Calu3 (cell line): ENCODE measurements at regions of chr6 and their contacts with region 1.

Region 1: GRCh38 chr6:129273161-129273560 is 390.2 kb downstream of the LAMA2 start:
- DNase-seq: no peak
- H3K4me3 Mint-ChIP-seq: no peak overlapping the region
- H3K27ac Mint-ChIP-seq: no peak overlapping the region
- H3K4me1 Mint-ChIP-seq: no peaks in the 10 kb centered on the region
- H3K27me3 Mint-ChIP-seq: no peaks in the 10 kb centered on the region
- CTCF ChIP-seq: no peak

Region 2: DNA sequence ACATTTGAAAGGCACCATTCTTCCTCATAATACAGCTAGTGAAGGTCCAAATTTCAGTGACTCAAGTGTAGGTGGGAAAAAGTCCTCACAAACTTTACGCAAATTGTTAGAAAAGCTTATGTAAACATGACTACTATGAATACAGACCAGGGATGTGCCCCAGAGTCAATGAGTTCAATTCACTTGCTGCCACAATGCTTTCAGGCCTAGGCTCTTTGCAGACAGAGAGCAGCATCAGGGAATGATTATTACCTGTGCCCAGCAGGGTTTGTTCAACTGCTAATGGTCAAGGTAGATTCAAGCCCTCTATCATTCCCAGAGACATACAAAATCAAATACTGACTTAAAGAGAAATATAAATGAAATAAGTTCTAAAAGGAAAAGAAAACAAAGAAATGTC is 306.2 kb before region 1 on chr6:
- CTCF ChIA-PET with region 1: no interaction called
- intact Hi-C with region 1: loop called (anchors 1 kb)
- DNase-seq: no peak
- H3K4me3 Mint-ChIP-seq: no peak overlapping the region
- H3K27ac Mint-ChIP-seq: no peak overlapping the region
- H3K4me1 Mint-ChIP-seq: no peaks in the 10 kb centered on the region
- H3K27me3 Mint-ChIP-seq: peaks cover 14% of the 10 kb centered on the region
- CTCF ChIP-seq: no peak

Region 3: GRCh38 chr6:129015721-129016120 is 257.4 kb before region 1 on chr6:
- CTCF ChIA-PET with region 1: no interaction called
- intact Hi-C with region 1: no loop called
- DNase-seq: no peak
- H3K4me3 Mint-ChIP-seq: no peak overlapping the region
- H3K27ac Mint-ChIP-seq: no peak overlapping the region
- H3K4me1 Mint-ChIP-seq: no peaks in the 10 kb centered on the region
- H3K27me3 Mint-ChIP-seq: peaks cover 7% of the 10 kb centered on the region
- CTCF ChIP-seq: no peak